ENCODE measurements at regions of chr19 and their contacts with region 1.

Region 1: DNA sequence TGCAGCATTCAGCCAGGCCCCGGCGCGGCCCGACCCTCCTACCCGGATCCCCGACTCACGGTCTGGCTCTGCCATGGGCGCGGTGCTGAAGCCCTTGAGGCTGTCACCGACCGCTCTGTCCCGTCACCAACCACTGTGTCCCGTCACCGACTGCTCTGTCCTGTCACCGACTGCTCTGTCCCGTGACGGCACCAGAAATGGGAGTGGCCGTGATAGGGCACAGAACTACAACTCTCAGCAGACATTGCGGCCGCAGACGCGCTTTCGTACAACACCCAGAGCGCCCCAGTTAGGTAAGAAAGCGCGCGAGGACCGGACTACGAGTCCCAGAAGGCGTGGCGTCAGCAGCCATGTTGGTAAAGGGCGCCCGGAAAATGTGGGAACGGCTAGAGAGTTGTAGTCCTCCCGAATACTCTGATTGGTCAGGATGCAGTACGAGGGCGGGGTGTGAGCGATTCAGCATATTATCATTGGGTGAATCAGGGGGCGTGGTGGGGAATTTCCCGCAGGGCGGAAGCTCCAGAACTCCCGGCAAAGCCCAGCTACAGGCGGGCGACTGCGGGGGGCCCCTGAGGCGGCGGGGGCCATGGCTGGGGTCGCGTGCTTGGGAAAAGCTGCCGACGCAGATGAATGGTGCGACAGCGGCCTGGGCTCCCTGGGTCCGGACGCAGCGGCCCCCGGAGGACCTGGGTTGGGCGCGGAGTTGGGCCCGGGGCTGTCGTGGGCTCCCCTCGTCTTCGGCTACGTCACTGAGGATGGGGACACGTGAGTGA is at the starts of genes NFKBIB and SIRT2:
- DNase-seq: peak; percentile 99
- ATAC-seq: peak; percentile 96
- H3K4me3 ChIP-seq: peak within 1 kb of the TSS; percentile 66
- H3K27ac ChIP-seq: peak within 1 kb of the TSS; percentile 58
- H3K4me1 ChIP-seq: peaks cover 3% of the 10 kb centered on the region; the same call in 1 of the 2 replicates
- H3K27me3 ChIP-seq: no peaks in the 10 kb centered on the region
- CTCF ChIP-seq: no peak
- POLR2A ChIP-seq: peak; percentile 87
- RAD21 ChIP-seq: no peak
- total RNA-seq, gene NFKBIB: 6.4 and 7.5 TPM in 2 replicates
- total RNA-seq, gene SIRT2: 37.5 and 43.0 TPM in 2 replicates

Region 2: GRCh38 chr19:38729653-38730469 is 169.8 kb before region 1 on chr19:
- CTCF ChIA-PET with region 1: no interaction called
- POLR2A ChIA-PET with region 1: no interaction called
- dilution Hi-C with region 1: no loop called
- in situ Hi-C with region 1: loop called (anchors 25 kb)
- intact Hi-C with region 1: no loop called
- DNase-seq: peak; percentile 44
- ATAC-seq: peak; percentile 60
- H3K4me3 ChIP-seq: no peak overlapping the region
- H3K27ac ChIP-seq: no peak overlapping the region
- H3K4me1 ChIP-seq: peaks cover 12% of the 10 kb centered on the region
- H3K27me3 ChIP-seq: no peaks in the 10 kb centered on the region
- CTCF ChIP-seq: peak; percentile 79
- POLR2A ChIP-seq: no peak
- RAD21 ChIP-seq: peak; percentile 65

Region 3: DNA sequence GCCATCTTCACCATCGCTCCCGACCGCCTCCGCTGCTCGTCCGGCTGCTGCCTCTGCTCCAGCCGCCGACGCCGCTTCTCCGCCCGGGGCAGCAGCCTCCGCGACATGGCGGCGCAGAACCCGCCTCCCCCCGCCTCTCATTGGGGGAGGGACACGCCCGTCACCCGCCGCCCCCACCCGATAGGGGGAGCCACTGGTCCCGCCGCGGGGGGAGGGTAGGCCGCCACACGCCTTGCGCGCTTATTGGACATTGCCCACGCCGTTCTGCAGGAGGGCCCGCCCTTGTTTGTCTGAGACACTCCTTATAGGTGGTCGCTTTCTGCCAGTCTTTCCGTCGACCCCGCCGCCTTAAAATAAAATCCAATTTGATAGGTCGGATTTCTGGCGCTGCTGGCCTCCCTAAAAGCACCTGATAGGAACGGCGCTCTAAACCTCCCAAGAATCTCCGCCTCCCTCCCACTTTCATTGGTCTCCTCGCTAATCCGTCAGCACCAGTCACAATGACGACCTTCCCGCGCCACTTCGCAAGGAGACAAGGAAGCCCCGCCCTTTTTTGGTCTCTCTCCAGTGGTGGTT is 49.7 kb before region 1 on chr19 and contains the start of gene HNRNPL:
- CTCF ChIA-PET with region 1: no interaction called
- POLR2A ChIA-PET with region 1: no interaction called
- dilution Hi-C with region 1: no loop called
- in situ Hi-C with region 1: no loop called
- intact Hi-C with region 1: loop called (anchors 1 kb)
- DNase-seq: peak; percentile 100
- ATAC-seq: peak; percentile 73
- H3K4me3 ChIP-seq: peak within 1 kb of the TSS; percentile 54
- H3K27ac ChIP-seq: peak within 1 kb of the TSS; percentile 72
- H3K4me1 ChIP-seq: peaks cover 15% of the 10 kb centered on the region
- H3K27me3 ChIP-seq: no peaks in the 10 kb centered on the region
- CTCF ChIP-seq: peak; percentile 64
- POLR2A ChIP-seq: peak; percentile 96
- RAD21 ChIP-seq: no peak
- total RNA-seq, gene HNRNPL: 316 and 429 TPM in 2 replicates

Region 4: GRCh38 chr19:39321832-39322176 is 422.2 kb after region 1 on chr19:
- CTCF ChIA-PET with region 1: interaction called, 10 read pairs
- POLR2A ChIA-PET with region 1: no interaction called
- dilution Hi-C with region 1: no loop called
- in situ Hi-C with region 1: no loop called
- intact Hi-C with region 1: no loop called
- DNase-seq: no peak
- ATAC-seq: no peak
- H3K4me3 ChIP-seq: no peak overlapping the region
- H3K27ac ChIP-seq: no peak overlapping the region
- H3K4me1 ChIP-seq: peaks cover 2% of the 10 kb centered on the region; the same call in 1 of the 2 replicates
- H3K27me3 ChIP-seq: peaks cover 30% of the 10 kb centered on the region
- CTCF ChIP-seq: no peak
- POLR2A ChIP-seq: no peak
- RAD21 ChIP-seq: no peak